ENCODE measurements at regions of chr7 and their contacts with region 1.

Region 1: DNA sequence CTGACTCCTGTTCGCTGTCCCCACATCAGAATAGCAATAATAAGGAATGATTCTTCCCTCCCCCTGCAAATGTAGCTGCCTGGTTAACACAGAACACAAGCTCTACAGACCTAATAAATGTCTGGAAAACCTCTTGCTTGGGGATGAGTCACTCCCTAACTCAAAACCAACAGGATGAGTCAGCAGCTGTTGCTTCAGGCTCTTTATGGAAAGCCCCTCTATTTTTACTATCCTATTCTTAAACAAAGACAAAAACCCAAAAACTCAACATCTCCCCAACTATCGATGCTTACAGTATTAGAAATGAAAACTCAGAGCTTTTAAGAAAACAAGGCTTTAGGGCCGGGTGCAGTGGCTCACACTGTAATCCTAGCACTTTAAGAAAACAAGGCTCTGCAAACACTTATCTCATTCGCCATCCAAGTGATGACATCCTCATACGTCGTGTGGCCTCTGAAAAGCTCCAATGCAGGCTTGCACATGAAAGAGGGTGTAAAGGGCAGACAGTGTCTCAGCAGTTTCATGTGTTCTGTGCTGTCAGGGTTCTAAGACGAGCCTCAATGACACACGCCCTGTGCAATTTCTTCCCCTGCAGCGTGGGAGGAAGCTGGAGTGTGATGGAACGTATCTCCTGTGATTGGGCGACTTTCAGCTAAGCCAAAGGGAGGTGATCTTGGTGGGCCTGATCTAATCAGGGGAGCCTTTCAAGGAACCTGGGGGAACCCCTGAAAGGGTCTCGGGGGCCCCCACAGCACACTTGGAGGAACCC is 70.1 kb downstream of the AMZ1 start:
- DNase-seq: peak; percentile 60 to 93
- H3K4me3 ChIP-seq: peak overlapping the region; percentile 37; the same call in 1 of the 2 replicates
- H3K27ac ChIP-seq: peak overlapping the region; percentile 93
- H3K4me1 ChIP-seq: peaks cover 60% of the 10 kb centered on the region
- H3K27me3 ChIP-seq: no peaks in the 10 kb centered on the region
- CTCF ChIP-seq: no peak

Region 2: DNA sequence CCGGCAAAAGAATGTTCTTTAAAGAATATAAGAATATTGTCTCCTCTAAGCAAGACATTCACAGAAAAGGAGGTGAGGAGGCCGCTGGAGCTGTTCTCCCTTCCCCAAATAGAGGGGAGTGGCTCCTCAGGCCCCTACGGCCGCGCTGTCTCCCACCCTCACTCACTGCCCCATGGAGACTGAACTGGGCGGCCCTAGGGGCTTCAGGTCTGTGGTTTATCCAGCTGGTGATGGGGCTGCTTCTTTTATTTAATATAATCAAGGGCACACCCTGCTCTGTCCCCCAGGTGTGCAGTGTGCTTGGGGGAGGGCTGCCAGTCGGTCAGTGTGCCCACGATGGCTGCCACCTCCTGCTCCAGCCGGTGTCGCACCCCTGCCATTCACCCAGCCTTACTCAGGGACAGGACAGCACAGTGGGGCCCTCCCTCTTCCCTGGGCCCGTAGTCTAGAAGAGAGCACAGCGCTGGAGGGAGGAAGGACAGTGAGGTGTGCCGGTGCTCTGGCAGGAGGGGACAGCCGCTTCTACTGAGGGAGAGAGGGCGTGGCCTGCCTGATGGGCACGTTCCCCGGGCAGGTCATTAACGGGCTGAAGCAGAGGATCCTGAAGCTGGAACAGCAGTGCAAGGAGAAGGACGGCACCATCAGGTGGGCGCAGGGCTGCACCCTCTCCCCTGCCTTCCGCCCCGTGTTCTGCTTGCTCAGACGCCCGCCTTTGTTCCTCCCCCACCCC is 175.9 kb before region 1 on chr7:
- CTCF ChIA-PET with region 1: no interaction called
- POLR2A ChIA-PET with region 1: no interaction called
- intact Hi-C with region 1: no loop called
- DNase-seq: no peak
- H3K4me3 ChIP-seq: no peak overlapping the region
- H3K27ac ChIP-seq: no peak overlapping the region
- H3K4me1 ChIP-seq: no peaks in the 10 kb centered on the region
- H3K27me3 ChIP-seq: no peaks in the 10 kb centered on the region
- CTCF ChIP-seq: no peak

Region 3: DNA sequence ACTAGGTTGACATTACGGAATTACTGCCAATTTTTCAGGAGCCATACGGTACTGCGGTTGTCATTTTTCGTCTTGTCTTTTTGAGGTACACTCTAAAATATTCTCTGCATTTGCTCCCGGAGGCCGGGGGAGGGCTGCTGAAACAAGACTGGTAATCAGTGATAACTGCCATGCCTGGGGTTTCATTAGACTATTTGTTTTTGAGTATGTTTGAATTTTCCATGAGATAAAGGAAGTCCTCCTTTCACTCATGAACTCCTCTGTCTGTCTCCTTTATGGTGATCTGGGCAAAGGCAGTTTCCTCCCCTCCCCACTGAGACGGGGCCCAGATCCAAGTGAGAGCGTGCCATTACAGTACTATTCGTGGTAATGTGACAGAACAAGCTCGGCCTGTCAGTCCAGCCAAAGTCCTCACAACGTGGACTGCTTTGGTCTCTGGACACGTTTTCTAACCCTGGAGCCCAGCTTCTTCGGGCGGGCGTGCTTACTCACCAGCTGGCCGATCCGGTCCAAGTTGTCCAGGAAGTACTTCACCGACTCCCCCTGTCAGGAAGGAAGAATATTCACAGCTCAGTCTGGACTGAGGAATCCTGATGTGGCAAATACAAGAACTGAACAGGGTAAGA is 25.0 kb before region 1 on chr7:
- CTCF ChIA-PET with region 1: interaction called, 4 read pairs
- POLR2A ChIA-PET with region 1: no interaction called
- intact Hi-C with region 1: loop called (anchors 1 kb)
- DNase-seq: peak; percentile 83 to 93
- H3K4me3 ChIP-seq: no peak overlapping the region
- H3K27ac ChIP-seq: peak overlapping the region; percentile 38
- H3K4me1 ChIP-seq: peaks cover 19% of the 10 kb centered on the region
- H3K27me3 ChIP-seq: no peaks in the 10 kb centered on the region
- CTCF ChIP-seq: no peak

Region 4: GRCh38 chr7:2800931-2801688 is 43.0 kb after region 1 on chr7:
- CTCF ChIA-PET with region 1: no interaction called
- POLR2A ChIA-PET with region 1: no interaction called
- intact Hi-C with region 1: loop called (anchors 5 kb)
- DNase-seq: peak in 1 of 2 experiments; percentile 19
- H3K4me3 ChIP-seq: peak overlapping the region; percentile 55; the same call in 1 of the 2 replicates
- H3K27ac ChIP-seq: peak overlapping the region; percentile 94
- H3K4me1 ChIP-seq: peaks cover 58% of the 10 kb centered on the region
- H3K27me3 ChIP-seq: no peaks in the 10 kb centered on the region
- CTCF ChIP-seq: no peak

Region 5: DNA sequence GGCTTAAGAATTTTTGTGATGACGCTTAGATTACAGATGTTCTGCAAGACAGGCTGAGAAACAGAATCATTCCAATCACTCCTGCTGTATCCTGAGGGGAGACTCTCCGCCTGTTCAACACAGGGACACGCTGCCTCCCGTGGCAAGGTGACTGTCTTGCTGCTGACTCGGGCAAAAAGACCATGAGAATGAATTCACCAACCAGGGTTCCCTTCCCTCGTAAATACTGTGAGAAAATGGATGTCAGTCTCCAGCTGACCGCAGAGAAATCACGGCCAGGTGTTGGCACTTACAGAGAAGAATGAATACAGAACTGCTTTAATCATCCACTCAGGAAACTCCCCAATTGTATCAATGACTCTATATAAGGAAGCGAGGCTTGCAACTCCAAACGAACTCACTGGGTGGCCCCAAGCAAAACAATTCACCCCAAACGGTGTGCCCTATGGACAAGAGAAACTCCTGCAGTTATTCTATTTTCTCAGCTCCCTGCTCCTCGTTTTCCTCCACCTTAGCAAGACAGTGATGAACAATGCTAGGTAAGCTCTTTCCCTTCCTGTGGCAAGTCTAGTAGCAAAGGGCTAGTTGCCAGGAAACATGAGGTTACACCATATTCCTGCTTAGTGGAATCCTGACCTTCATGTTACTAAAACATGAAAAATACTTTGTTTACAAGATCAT is 63.2 kb after region 1 on chr7:
- CTCF ChIA-PET with region 1: no interaction called
- POLR2A ChIA-PET with region 1: interaction called, 4 read pairs
- intact Hi-C with region 1: loop called (anchors 2 kb)
- DNase-seq: peak; percentile 38 to 86
- H3K4me3 ChIP-seq: peak overlapping the region; percentile 20; the same call in 1 of the 2 replicates
- H3K27ac ChIP-seq: peak overlapping the region; percentile 95
- H3K4me1 ChIP-seq: peaks cover 67% of the 10 kb centered on the region
- H3K27me3 ChIP-seq: no peaks in the 10 kb centered on the region
- CTCF ChIP-seq: peak; percentile 26; the same call in 1 of the 2 replicates

Region 6: DNA sequence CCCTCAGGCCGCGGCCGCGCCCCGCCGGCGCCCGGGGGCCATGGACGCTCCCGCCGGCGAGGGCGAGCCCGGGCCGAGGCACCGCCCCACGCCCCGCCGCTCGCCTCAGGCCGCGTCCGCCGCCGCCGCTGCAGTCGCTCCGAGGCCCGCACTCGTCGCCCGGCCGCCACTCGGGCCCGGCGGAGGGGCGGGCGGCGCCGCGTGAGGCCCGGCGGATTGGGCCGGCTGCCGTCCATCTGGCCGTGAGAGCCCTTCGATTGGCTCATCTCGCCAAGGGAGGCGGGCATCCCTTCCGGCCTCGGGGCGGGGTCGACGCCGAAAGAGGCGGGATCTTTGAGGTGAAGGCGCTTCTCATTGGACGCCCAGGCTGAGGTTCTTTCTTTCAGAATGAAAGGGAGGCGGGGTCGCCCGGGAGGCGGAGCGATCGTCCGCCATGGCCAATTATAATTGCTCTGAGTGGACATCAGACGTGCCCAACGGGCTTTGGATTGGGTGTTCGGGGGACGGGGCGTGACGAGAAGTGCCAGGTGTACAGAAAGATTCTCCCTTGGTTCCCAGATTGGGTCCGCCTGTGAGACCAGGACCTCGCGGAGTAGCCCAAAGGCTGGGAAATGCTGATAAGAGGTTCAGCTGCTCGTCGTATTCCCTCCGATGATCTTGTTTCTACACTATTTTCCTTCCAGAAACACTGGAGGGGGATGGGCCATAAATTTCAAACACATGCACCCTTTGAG is 86.2 kb after region 1 on chr7 and contains the start of gene GNA12:
- CTCF ChIA-PET with region 1: no interaction called
- POLR2A ChIA-PET with region 1: interaction called, 29 read pairs
- intact Hi-C with region 1: loop called (anchors 2 kb)
- DNase-seq: peak; percentile 97 to 100
- H3K4me3 ChIP-seq: peak within 1 kb of the TSS; percentile 73
- H3K27ac ChIP-seq: peak within 1 kb of the TSS; percentile 46; the same call in 1 of the 2 replicates
- H3K4me1 ChIP-seq: peaks cover 31% of the 10 kb centered on the region
- H3K27me3 ChIP-seq: no peaks in the 10 kb centered on the region
- CTCF ChIP-seq: no peak
- total RNA-seq, gene GNA12: 50.8 and 51.7 TPM in 2 replicates

Region 7: DNA sequence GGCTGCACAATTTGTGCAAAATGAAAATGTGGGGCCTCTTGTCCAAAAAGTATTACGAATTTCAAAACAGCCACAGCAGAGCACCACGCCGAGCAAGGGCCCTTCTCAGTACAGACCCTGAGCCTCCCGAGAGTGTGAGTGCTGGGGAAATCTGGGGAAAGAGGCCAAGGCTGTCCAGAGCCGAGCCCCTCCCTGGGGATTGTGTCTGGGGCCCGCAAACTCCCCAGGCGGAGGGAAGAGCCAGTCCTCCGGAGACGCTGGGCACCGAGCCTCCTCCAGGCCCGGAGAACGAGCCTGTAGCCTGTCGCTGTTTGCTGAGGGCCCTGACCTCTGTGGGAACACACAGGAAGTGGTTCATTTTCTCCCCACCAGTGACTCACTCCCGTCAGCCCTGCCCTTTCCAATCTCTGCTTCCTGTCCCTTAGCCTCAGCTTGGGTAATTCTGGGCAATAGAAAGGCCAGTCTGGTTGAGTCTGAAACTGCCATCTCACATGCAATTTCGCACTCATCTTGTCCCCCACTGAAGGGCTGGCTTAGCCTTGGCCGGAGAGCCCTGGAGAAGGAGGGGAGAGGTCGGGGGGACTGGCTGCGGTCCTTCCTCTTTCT is 105.5 kb after region 1 on chr7:
- CTCF ChIA-PET with region 1: interaction called, 10 read pairs
- POLR2A ChIA-PET with region 1: no interaction called
- intact Hi-C with region 1: no loop called
- DNase-seq: peak; percentile 85 to 96
- H3K4me3 ChIP-seq: peak overlapping the region; percentile 58
- H3K27ac ChIP-seq: peak overlapping the region; percentile 97
- H3K4me1 ChIP-seq: peaks cover 28% of the 10 kb centered on the region
- H3K27me3 ChIP-seq: no peaks in the 10 kb centered on the region
- CTCF ChIP-seq: no peak

Region 8: DNA sequence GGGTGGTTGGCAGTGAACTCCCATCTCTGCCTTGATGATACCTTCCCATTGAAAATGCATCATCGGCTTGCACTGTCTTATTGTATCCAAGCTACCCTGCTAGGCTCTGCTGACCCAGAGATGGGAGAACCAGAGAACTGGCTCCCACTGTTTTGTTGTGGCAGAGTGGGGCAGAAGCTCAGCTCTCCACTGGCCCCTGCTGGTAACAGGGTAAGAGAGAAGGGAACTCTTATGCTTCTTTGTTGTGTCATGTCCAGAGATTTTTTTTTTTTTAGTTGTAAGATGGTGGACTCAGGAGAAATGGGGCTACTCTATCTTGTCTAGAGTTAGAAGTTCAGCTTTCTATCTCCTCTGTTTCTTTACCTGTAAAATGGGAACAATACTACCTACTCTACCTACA is 442.4 kb after region 1 on chr7:
- CTCF ChIA-PET with region 1: no interaction called
- POLR2A ChIA-PET with region 1: no interaction called
- intact Hi-C with region 1: no loop called
- DNase-seq: no peak
- H3K4me3 ChIP-seq: no peak overlapping the region
- H3K27ac ChIP-seq: no peak overlapping the region
- H3K4me1 ChIP-seq: peaks cover 15% of the 10 kb centered on the region
- H3K27me3 ChIP-seq: no peaks in the 10 kb centered on the region
- CTCF ChIP-seq: peak; percentile 60

Measured in PC-9 (cell line).